Transverse colon (tissue), 4 donors: ENCODE measurements at regions of chr4 and their contacts with region 1.

Region 1: GRCh38 chr4:80017125-80017854 is 55.7 kb downstream of the ANTXR2 start:
- DNase-seq: no peak
- H3K4me3 ChIP-seq: no peak overlapping the region
- H3K27ac ChIP-seq: peak overlapping the region; percentile 9 to 60 (median 48)
- H3K4me1 ChIP-seq: peaks cover 2 to 32% (median 4%) of the 10 kb centered on the region in 4 donors
- H3K27me3 ChIP-seq: no peaks in the 10 kb centered on the region
- CTCF ChIP-seq: no peak
- EP300 ChIP-seq: no peak
- POLR2A ChIP-seq: no peak

Region 2: GRCh38 chr4:79982601-79983322 is 34.5 kb before region 1 on chr4:
- in situ Hi-C with region 1: no loop called
- intact Hi-C with region 1: no loop called
- DNase-seq: no peak
- H3K4me3 ChIP-seq: no peak overlapping the region
- H3K27ac ChIP-seq: peak overlapping the region in 1 of 4 donors; percentile 8
- H3K4me1 ChIP-seq: peaks cover 0 to 3% (median 0%) of the 10 kb centered on the region in 4 donors
- H3K27me3 ChIP-seq: no peaks in the 10 kb centered on the region
- CTCF ChIP-seq: no peak
- EP300 ChIP-seq: no peak
- POLR2A ChIP-seq: no peak

Region 3: GRCh38 chr4:80072744-80073472 is 55.6 kb after region 1 on chr4 and contains the start of gene ANTXR2:
- in situ Hi-C with region 1: no loop called
- intact Hi-C with region 1: loop called (anchors 10 kb)
- DNase-seq: peak; percentile 92
- H3K4me3 ChIP-seq: peak within 1 kb of the TSS; percentile 84 to 95 (median 90)
- H3K27ac ChIP-seq: peak within 1 kb of the TSS; percentile 93 to 97 (median 96)
- H3K4me1 ChIP-seq: peaks cover 10 to 60% (median 32%) of the 10 kb centered on the region in 4 donors
- H3K27me3 ChIP-seq: no peaks in the 10 kb centered on the region
- CTCF ChIP-seq: peak in 2 of 5 experiments; percentile 13
- EP300 ChIP-seq: no peak
- POLR2A ChIP-seq: peak; percentile 93
- total RNA-seq, gene ANTXR2: 46.8 to 89.8 (median 76.0) TPM